ENCODE measurements at regions of chr19 and their contacts with region 1.

Region 1: DNA sequence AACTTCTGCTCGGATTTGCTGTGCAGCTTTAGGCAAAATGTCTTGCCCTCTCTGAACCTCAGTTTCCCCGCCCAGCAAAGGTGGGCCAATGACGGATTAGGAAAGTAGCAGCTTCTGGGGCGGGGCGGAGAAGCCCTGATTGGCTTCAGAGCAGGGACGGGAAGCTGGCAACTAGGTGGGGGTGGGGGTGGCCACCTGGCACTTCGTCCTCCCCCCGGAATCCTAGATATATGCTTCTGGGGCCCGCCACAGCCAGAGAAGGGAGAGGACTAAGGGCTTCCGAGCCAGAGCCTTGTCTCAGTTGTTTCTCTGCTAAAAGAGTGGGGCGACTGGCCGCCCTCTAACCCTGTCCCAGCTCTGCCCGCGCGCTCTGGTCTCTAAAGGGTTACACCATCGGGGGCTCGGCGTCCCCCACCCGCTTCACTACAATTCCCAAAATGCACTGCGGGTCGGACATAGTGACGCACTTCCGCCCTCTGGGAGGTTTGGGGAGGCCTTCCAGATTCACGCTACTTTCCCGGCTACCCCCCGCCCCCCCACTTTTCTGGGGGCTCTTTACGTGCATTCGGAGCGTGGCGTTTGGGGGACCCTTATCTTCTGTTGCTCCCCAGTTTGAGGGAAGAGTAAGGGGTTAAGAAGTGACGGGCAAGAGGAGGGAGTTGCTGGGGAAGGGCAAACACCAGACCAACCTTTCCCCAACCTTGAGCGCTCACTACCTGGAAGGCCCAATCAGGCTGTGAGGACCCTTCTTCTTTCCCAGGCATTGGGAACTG is 672 bp upstream of the IRF2BP1 start:
- DNase-seq: peak; percentile 86 to 93 (median 90)
- H3K4me3 ChIP-seq: peak overlapping the region; percentile 61 to 97 (median 83)
- H3K27ac ChIP-seq: peak overlapping the region; percentile 62 to 97 (median 89)
- H3K27me3 ChIP-seq: no peaks in the 10 kb centered on the region
- CTCF ChIP-seq: peak in 17 of 56 donors; percentile 2 to 35 (median 14)

Region 2: GRCh38 chr19:45591004-45591637 is 295.5 kb before region 1 on chr19:
- intact Hi-C with region 1: no loop called
- DNase-seq: no peak
- H3K4me3 ChIP-seq: no peak overlapping the region
- H3K27ac ChIP-seq: no peak overlapping the region
- H3K27me3 ChIP-seq: peaks cover 0 to 48% (median 7%) of the 10 kb centered on the region in 45 donors
- CTCF ChIP-seq: peak in 26 of 56 donors; percentile 7 to 52 (median 24)

Region 3: GRCh38 chr19:45770192-45771101 is 116.2 kb before region 1 on chr19:
- intact Hi-C with region 1: loop called in 1 of 2 experiments (anchors 5 kb)
- DNase-seq: peak; percentile 73 to 95 (median 92)
- H3K4me3 ChIP-seq: peak overlapping the region; percentile 43 to 79 (median 68)
- H3K27ac ChIP-seq: peak overlapping the region; percentile 71 to 97 (median 93)
- H3K27me3 ChIP-seq: peaks cover 0 to 26% (median 3%) of the 10 kb centered on the region in 45 donors
- CTCF ChIP-seq: peak; percentile 80 to 99 (median 93)

Region 4: GRCh38 chr19:45902651-45903625 is 16.3 kb after region 1 on chr19:
- intact Hi-C with region 1: loop called (anchors 1 to 2 kb)
- DNase-seq: peak; percentile 91 to 99 (median 95)
- H3K4me3 ChIP-seq: peak overlapping the region; percentile 57 to 99 (median 85)
- H3K27ac ChIP-seq: peak overlapping the region; percentile 71 to 99 (median 94)
- H3K27me3 ChIP-seq: no peaks in the 10 kb centered on the region
- CTCF ChIP-seq: peak in 29 of 56 donors; percentile 5 to 55 (median 23)

Region 5: GRCh38 chr19:45973578-45974338 is 87.1 kb after region 1 on chr19 and contains the start of gene NOVA2:
- intact Hi-C with region 1: no loop called
- DNase-seq: peak; percentile 85 to 96 (median 94)
- H3K4me3 ChIP-seq: peak within 1 kb of the TSS; percentile 42 to 80 (median 67)
- H3K27ac ChIP-seq: peak within 1 kb of the TSS in 56 of 59 donors; percentile 0 to 97 (median 86)
- H3K27me3 ChIP-seq: no peaks in the 10 kb centered on the region
- CTCF ChIP-seq: peak in 11 of 56 donors; percentile 8 to 39 (median 16)
- total RNA-seq, gene NOVA2: 41.1 to 95.4 (median 71.8) TPM

Region 6: DNA sequence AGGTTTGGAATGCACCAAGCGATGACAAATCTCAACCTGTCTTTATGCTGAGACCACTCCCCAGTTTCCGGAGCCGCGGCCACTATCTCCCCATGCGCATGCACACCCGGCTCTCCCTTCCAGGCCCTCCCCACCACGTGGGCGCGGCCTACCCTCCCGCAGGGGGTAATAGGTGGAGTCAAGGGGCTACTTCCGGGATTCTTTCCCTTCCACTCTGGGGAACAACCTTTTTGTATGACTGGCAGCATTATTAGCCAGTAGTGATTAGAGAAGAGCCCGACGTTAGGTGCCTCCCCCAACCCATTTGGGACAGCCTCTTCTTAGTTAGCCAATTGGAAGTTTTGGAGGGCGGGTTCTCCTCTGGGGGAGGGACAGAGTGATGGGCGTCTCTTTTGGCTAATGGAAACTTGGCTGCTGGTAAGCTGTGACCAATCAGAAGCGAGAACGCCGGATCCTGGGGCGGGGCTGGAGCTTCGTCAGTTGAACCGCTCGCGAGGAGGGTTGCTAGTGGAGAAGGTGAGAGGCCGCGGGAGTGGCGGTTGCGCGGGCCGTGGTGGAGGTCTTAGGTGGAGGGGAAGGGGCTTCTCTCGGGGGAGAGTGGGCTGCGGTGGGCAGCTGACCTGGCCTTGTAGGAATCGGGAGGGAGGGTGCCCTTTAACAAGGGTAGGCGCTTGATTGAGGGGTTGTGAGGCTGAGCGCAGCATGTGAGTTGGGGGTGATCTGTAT is 108.5 kb after region 1 on chr19 and contains the start of gene CCDC61:
- intact Hi-C with region 1: loop called in 1 of 2 experiments (anchors 5 kb)
- DNase-seq: peak; percentile 91 to 98 (median 97)
- H3K4me3 ChIP-seq: peak within 1 kb of the TSS; percentile 47 to 99 (median 88)
- H3K27ac ChIP-seq: peak within 1 kb of the TSS in 41 of 59 donors; percentile 13 to 87 (median 67)
- H3K27me3 ChIP-seq: no peaks in the 10 kb centered on the region
- CTCF ChIP-seq: peak in 18 of 56 donors; percentile 5 to 45 (median 23)
- total RNA-seq, gene CCDC61: 19.7 to 65.4 (median 34.3) TPM

Region 7: GRCh38 chr19:46076951-46077816 is 190.6 kb after region 1 on chr19:
- intact Hi-C with region 1: loop called in 1 of 2 experiments (anchors 5 kb)
- DNase-seq: peak; percentile 23 to 87 (median 82)
- H3K4me3 ChIP-seq: peak overlapping the region; percentile 45 to 84 (median 68)
- H3K27ac ChIP-seq: peak overlapping the region in 43 of 59 donors; percentile 4 to 89 (median 67)
- H3K27me3 ChIP-seq: peaks cover 0 to 8% (median 0%) of the 10 kb centered on the region in 45 donors
- CTCF ChIP-seq: peak; percentile 68 to 100 (median 97)

Measured in dorsolateral prefrontal cortex (tissue), 120 donors.